ENCODE measurements at regions of chr22 and their contacts with region 1.

Region 1: DNA sequence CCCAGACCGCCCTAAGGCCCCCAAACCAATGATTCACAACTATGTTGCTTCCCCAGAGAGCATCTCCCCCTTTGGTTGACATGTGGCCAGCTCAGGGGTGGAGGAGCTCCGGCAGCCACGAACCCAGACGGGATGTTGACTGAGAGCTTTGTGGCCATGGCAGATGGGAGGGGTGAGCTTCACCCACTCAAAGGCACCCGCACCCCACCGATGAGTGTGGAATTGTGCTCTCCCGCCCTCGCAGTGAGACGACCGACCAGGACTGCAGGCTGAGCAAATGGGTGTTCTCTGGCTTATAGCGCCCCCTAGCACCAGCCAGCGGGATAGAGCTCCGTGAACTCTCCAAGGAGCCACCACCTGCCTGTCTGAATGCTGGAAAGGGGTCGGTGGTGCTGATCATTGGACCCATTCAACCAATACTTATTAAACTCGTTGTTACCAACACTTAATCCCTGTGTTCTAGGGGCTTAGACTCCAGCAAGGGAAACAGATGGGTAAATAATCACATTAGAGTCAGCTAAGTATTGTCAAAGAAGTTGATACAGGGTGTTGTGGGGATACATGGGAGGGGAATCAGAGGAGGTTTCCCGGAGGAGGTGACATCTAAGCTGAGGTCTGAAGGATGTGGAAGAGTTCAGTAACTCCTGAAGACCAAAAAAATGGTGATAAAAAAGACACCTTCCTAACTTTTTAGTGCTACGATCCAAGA is 4.5 kb upstream of the TIMP3 start:
- DNase-seq: peak; percentile 74
- H3K4me3 Mint-ChIP-seq: no peak overlapping the region
- H3K27ac Mint-ChIP-seq: no peak overlapping the region
- H3K4me1 Mint-ChIP-seq: peaks cover 4% of the 10 kb centered on the region
- H3K27me3 Mint-ChIP-seq: peaks cover 29% of the 10 kb centered on the region

Region 2: DNA sequence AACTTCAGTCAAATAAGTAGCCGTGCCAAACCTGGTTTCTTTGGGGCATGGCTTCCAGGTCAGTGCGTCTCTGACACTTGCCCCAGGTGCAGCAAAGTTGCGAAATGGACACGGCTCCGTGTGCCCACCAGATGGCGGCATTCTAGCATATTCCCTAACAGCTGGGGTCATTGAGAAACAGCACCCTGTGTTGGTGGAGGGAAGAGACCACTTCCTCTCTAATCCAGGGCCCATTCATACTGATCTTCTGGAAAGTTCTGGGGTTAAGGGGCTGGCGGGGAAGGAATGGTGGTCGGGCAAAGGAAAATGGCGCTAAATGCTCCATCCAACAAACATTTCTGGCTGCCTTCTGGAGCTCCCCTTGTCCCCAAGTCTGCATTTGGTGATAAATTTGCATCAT is 136.7 kb before region 1 on chr22:
- CTCF ChIA-PET with region 1: interaction called, 125 read pairs
- intact Hi-C with region 1: loop called (anchors 1 kb)
- DNase-seq: peak; percentile 78
- H3K4me3 Mint-ChIP-seq: no peak overlapping the region
- H3K27ac Mint-ChIP-seq: no peak overlapping the region
- H3K4me1 Mint-ChIP-seq: no peaks in the 10 kb centered on the region
- H3K27me3 Mint-ChIP-seq: no peaks in the 10 kb centered on the region

Region 3: GRCh38 chr22:32731372-32731771 is 65.6 kb before region 1 on chr22:
- CTCF ChIA-PET with region 1: no interaction called
- intact Hi-C with region 1: no loop called
- DNase-seq: no peak
- H3K4me3 Mint-ChIP-seq: no peak overlapping the region
- H3K27ac Mint-ChIP-seq: no peak overlapping the region
- H3K4me1 Mint-ChIP-seq: no peaks in the 10 kb centered on the region
- H3K27me3 Mint-ChIP-seq: peaks cover 2% of the 10 kb centered on the region

Region 4: DNA sequence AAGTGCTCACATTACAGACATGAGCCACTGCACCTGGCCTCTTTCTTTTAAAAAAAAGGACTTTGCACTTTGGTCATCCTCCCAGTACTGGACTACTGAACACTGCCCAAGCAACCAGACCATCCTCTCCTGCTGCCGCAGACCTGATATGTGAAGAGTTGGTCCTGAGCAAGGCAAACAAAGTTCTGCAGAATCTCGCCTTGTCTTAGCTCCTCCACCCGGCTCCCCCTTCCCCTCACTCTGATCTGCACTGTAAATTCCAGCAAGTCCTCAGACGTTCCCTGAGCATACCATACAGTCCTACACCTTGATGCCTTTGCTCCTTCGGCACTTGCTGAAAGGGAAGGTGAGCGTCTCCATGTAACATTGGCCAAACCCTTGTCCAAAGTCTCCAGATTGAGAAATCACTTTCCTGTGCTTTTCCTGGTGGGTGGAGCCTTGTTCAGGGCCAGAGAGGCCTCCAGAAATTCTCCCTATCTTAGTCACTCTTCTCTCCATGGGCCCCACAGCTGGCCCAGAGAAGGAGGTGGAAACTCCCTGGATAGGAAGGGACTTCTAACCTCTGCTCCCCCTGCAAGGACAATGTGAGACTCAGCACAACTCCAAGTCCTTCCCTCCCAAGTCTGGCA is 42.5 kb before region 1 on chr22:
- CTCF ChIA-PET with region 1: no interaction called
- intact Hi-C with region 1: no loop called
- DNase-seq: no peak
- H3K4me3 Mint-ChIP-seq: no peak overlapping the region
- H3K27ac Mint-ChIP-seq: no peak overlapping the region
- H3K4me1 Mint-ChIP-seq: peaks cover 2% of the 10 kb centered on the region
- H3K27me3 Mint-ChIP-seq: no peaks in the 10 kb centered on the region

Region 5: GRCh38 chr22:32785321-32786034 is 11.5 kb before region 1 on chr22:
- CTCF ChIA-PET with region 1: interaction called, 14 read pairs
- intact Hi-C with region 1: no loop called
- DNase-seq: no peak
- H3K4me3 Mint-ChIP-seq: no peak overlapping the region
- H3K27ac Mint-ChIP-seq: no peak overlapping the region
- H3K4me1 Mint-ChIP-seq: no peaks in the 10 kb centered on the region
- H3K27me3 Mint-ChIP-seq: no peaks in the 10 kb centered on the region

Region 6: GRCh38 chr22:32985899-32986765 is 189.1 kb after region 1 on chr22:
- CTCF ChIA-PET with region 1: interaction called, 8 read pairs
- intact Hi-C with region 1: loop called (anchors 2 kb)
- DNase-seq: peak; percentile 70
- H3K4me3 Mint-ChIP-seq: no peak overlapping the region
- H3K27ac Mint-ChIP-seq: no peak overlapping the region
- H3K4me1 Mint-ChIP-seq: no peaks in the 10 kb centered on the region
- H3K27me3 Mint-ChIP-seq: no peaks in the 10 kb centered on the region

Measured in activated naive CD4-positive, alpha-beta T cell treated with anti-CD3 and anti-CD28 coated beads for 36 hours (primary cell).